IMR-90 (cell line): ENCODE measurements at regions of chr6 and their contacts with region 1.

Region 1: DNA sequence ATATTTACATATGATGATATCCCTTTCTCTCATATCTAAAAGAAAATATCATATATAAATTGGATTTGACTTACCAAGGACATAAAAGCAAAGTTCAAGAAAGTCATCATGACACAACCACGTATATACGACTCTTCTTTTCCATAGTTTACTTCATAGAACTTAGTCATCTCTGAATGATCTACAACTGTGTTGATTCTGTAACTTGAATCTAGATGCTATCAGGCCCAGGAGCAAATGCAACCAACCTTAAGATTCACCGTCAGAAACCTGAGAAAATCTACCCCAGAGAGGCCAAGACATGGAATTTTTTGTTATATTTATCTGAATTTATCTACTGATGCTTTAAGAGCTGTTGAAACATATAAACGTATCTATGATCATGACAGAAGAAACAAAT is 165.6 kb downstream of the PDE10A start:
- DNase-seq: peak; percentile 83
- ATAC-seq: peak; percentile 82
- H3K4me3 ChIP-seq: no peak overlapping the region
- H3K27ac ChIP-seq: no peak overlapping the region
- H3K4me1 ChIP-seq: peaks cover 4% of the 10 kb centered on the region; the same call in 1 of the 2 replicates
- H3K27me3 ChIP-seq: no peaks in the 10 kb centered on the region
- CTCF ChIP-seq: no peak
- POLR2A ChIP-seq: no peak
- RAD21 ChIP-seq: no peak

Region 2: DNA sequence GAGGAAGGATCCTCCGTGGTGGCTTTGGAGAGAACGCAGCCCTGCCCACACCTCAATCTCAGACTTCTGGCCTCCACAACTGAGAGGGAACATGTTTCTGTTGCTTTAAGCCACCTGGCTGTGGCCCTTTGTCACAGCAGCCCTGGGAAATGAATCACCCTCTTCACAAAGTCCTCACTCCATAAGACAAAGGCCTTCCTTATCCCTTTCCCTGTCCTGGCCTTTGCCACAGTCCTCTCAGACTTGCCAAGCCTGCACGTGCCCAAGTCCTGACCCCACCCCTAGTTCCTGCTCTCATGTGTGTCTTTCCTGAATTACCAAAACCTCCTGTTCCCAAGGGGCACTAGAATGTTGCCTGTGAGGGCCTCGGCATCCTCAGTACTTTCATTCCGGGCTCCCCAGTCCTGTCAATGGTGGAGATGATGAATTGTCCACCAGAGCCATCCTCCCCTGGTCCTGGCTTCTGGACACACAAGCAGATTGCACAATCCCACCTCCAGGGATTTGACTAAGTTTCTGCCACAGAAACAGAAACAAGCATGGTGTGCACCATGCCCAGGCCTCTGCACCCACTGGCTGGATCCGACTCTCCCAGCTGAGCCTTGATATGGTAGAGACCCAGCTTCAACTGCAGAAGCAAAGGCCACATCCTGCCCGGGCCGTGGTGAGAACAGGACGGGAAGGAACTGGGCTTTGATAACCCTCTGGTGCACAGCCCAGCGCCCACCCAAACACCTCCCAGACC is 398.1 kb after region 1 on chr6:
- CTCF ChIA-PET with region 1: no interaction called
- POLR2A ChIA-PET with region 1: interaction called, 11 read pairs
- dilution Hi-C with region 1: no loop called
- in situ Hi-C with region 1: no loop called
- intact Hi-C with region 1: no loop called
- DNase-seq: no peak
- ATAC-seq: peak; percentile 44; the same call in 1 of the 2 replicates
- H3K4me3 ChIP-seq: no peak overlapping the region
- H3K27ac ChIP-seq: no peak overlapping the region
- H3K4me1 ChIP-seq: no peaks in the 10 kb centered on the region
- H3K27me3 ChIP-seq: no peaks in the 10 kb centered on the region
- CTCF ChIP-seq: no peak
- POLR2A ChIP-seq: no peak
- RAD21 ChIP-seq: no peak